ENCODE measurements at regions of chr1 and their contacts with region 1.

Region 1: GRCh38 chr1:40691538-40692428 is at the start of gene NFYC:
- DNase-seq: peak; percentile 92
- ATAC-seq: peak; percentile 90
- H3K4me3 Mint-ChIP-seq: peak within 1 kb of the TSS; percentile 97
- H3K27ac Mint-ChIP-seq: peak within 1 kb of the TSS; percentile 98
- H3K4me1 Mint-ChIP-seq: peaks cover 47% of the 10 kb centered on the region
- H3K27me3 Mint-ChIP-seq: no peaks in the 10 kb centered on the region
- total RNA-seq, gene NFYC: 65.0 to 66.6 TPM

Region 2: DNA sequence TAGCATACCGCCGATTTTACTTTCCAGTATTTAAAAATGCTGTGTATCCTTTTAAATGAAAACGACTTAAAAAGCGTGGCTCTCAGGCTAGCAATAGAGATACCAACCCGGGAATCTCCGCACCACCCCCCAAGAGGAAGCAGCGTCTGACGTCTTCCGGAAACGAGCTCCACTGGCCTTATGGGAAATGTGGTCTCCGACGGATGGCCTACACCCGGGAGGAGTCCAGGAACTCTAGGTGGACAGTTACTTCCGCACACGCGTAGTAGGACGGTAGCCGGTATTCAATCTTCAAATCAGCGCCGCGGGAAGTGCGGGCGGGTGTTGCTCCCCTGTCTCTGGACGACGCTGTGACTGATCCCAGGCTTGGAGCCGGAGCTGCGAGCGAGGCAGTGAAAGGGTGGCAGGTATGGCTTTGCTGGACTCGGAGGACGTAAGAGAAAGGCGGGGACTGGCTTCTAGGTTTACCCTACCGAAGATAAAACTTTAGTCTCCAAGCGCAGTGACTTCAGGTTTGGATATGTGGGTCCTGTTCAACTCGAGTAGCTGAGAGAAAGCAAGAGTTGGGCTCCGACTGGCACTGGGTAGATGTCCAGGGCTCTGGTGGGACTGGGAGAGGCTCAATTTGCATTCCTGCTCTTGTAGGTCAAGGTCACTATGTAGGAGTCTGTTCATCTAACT is 160.3 kb before region 1 on chr1 and contains the start of gene ZNF684:
- POLR2A ChIA-PET with region 1: interaction called, 10 read pairs
- DNase-seq: peak; percentile 78
- ATAC-seq: peak; percentile 96
- H3K4me3 Mint-ChIP-seq: peak within 1 kb of the TSS; percentile 98
- H3K27ac Mint-ChIP-seq: peak within 1 kb of the TSS; percentile 93
- H3K4me1 Mint-ChIP-seq: peaks cover 17% of the 10 kb centered on the region
- H3K27me3 Mint-ChIP-seq: no peaks in the 10 kb centered on the region
- total RNA-seq, gene ZNF684: 7.1 to 7.2 TPM

Region 3: GRCh38 chr1:40650075-40650474 is 41.7 kb before region 1 on chr1:
- POLR2A ChIA-PET with region 1: no interaction called
- DNase-seq: no peak
- ATAC-seq: peak; percentile 50
- H3K4me3 Mint-ChIP-seq: no peak overlapping the region
- H3K27ac Mint-ChIP-seq: no peak overlapping the region
- H3K4me1 Mint-ChIP-seq: peaks cover 7% of the 10 kb centered on the region
- H3K27me3 Mint-ChIP-seq: peaks cover 16% of the 10 kb centered on the region

Region 4: DNA sequence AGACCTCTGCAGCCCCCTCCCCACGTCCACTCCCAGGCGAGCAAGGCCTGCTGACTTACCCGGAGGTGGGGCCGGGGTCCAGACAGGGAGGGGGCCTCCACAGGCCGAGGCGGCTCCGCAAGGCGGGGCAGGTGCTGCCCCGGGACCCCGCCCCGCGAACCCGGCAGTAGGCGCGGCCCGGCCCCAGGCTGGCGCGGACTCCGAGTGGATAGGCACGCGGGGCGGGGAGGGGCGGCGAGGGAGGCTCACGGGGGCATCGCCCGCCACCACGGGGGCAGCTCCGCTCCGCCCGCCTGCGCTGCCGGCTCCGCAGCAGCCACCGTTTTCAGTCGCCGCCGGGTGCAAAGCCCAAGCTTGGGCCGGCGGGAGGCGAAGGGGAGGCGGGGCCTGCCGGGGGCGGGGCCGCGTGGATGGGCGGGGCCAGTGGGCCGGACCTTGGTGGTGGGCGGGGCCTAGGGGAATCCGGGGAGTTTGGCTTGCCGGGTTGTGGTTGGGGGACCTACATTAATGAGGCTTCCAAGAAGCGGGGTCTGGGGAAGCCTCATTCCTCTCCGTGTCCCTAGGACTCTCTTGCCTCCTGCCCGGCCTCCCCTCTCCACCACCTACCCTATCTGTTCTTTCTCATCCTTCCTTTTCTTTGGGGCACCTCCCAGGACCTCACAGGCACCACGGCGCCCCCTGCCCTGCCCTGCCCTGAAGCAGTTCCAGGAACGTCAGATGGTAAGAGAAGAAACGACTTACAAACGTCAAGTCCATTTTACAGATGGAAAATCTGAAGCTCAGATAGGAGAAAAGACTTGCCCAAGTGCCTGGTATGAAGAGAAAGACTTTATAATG is 26.2 kb before region 1 on chr1 and contains the start of gene RIMS3:
- POLR2A ChIA-PET with region 1: interaction called, 13 read pairs
- DNase-seq: peak; percentile 96
- ATAC-seq: peak; percentile 71
- H3K4me3 Mint-ChIP-seq: peak within 1 kb of the TSS; percentile 90
- H3K27ac Mint-ChIP-seq: peak within 1 kb of the TSS; percentile 86
- H3K4me1 Mint-ChIP-seq: peaks cover 20% of the 10 kb centered on the region
- H3K27me3 Mint-ChIP-seq: peaks cover 1% of the 10 kb centered on the region
- total RNA-seq, gene RIMS3: 6.9 TPM

Region 5: GRCh38 chr1:40703316-40703715 is 11.5 kb after region 1 on chr1:
- POLR2A ChIA-PET with region 1: interaction called, 82 read pairs
- DNase-seq: no peak
- ATAC-seq: no peak
- H3K4me3 Mint-ChIP-seq: no peak overlapping the region
- H3K27ac Mint-ChIP-seq: no peak overlapping the region
- H3K4me1 Mint-ChIP-seq: peaks cover 37% of the 10 kb centered on the region
- H3K27me3 Mint-ChIP-seq: no peaks in the 10 kb centered on the region

Region 6: DNA sequence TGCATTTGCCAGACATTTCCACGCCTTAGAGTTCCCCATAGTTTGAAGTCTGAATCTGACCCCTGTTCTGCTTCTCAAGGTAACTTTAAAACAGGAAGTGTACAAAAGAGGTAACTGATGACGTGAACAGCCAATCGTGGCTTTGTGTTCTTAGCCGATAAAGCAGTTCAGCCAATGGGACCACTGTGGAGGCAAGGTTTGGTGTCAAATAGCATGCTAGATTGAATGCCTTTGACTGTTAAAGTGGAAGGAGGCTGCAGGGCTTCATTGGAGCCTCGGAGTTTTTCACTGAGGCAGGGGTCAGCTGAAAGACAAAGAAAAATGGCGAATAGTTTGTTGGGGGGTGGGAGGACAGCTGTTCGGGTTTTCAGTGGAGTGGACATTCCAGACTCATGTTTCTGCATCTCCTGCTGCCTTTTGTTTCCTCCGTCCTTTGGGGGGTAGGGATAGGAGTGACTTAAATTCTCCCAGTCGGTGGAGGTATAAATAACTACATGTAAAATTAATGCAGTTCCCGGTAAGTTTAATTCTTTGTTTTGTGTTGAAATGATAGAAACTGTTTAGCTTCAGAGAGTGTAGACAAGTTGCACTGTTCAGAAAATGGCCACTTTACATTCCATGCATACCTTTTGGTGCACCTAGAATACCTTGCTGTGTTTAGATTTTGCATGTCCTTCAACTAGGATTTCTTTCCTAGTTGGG is 17.5 kb after region 1 on chr1:
- POLR2A ChIA-PET with region 1: interaction called, 82 read pairs
- DNase-seq: peak; percentile 47
- ATAC-seq: peak; percentile 97
- H3K4me3 Mint-ChIP-seq: peak overlapping the region; percentile 92
- H3K27ac Mint-ChIP-seq: peak overlapping the region; percentile 93
- H3K4me1 Mint-ChIP-seq: peaks cover 37% of the 10 kb centered on the region
- H3K27me3 Mint-ChIP-seq: no peaks in the 10 kb centered on the region

Region 7: DNA sequence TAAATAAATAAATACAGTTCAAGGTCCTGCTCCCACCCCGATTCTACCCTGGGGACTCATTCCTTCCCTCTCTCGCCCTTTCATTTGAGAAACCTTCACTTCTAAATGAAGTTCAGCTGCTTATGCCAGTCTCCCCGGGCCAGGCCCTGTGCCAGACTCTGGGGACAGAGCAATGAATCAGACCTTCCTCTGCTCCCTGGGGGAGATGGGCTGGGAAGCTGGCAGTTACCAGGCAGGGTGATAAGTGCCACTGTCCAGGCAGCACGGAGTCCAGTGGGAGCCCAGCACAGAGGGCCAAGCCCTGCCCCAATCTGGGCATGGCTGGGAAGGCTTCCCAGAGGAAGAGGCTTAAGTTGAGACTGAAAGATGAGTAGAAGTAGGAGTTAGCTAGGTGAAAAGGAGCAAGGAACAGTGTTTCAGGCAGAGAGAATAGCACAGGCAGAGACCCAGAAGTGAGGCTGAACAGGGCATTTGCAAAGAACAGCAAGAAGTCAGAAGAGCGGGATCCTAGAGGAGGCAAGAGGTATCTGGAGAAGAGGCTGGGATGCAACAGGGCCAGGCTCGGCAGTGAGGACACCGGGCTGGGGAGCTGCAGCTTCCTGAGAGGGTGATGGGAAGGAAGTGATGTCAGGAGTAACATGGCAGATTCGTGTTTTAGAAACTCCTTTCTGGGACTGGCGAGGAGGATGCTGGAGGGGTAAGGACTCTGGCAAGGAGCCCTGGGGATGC is 105.3 kb after region 1 on chr1:
- POLR2A ChIA-PET with region 1: interaction called, 11 read pairs
- DNase-seq: no peak
- ATAC-seq: no peak
- H3K4me3 Mint-ChIP-seq: peak overlapping the region; percentile 64
- H3K27ac Mint-ChIP-seq: peak overlapping the region; percentile 84
- H3K4me1 Mint-ChIP-seq: peaks cover 45% of the 10 kb centered on the region
- H3K27me3 Mint-ChIP-seq: no peaks in the 10 kb centered on the region

Measured in activated naive CD8-positive, alpha-beta T cell treated with anti-CD3 and anti-CD28 coated beads, Interleukin-2, amount 10 ng/mL, durations not matched to agents 7 days and 5 days (primary cell).